ENCODE measurements at regions of chr1 and their contacts with region 1.

Region 1: DNA sequence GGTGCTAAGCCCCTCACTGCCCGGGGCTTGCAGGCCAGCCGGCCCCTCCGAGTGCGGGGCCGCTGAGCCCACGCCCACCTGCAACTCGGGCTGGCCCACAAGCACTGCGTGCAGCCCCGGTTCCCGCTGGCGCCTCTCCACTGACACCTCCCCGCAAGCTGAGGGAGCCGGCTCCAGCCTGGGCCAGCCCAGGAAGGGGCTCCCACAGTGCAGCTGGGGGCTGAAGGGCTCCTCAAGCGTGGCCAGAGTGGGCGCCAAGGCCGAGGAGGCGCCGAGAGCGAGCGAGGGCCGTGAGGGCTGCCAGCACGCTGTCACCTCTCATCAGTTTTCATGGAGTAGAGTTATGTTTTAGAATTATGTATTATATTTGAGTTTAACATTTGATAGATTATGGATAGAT is 176.5 kb upstream of the FAM78B start:
- DNase-seq: no peak
- H3K4me3 Mint-ChIP-seq: no peak overlapping the region
- H3K27ac Mint-ChIP-seq: no peak overlapping the region
- H3K4me1 Mint-ChIP-seq: no peaks in the 10 kb centered on the region
- H3K27me3 Mint-ChIP-seq: no peaks in the 10 kb centered on the region

Region 2: GRCh38 chr1:165949335-165950130 is 393.7 kb before region 1 on chr1:
- CTCF ChIA-PET with region 1: no interaction called
- POLR2A ChIA-PET with region 1: no interaction called
- intact Hi-C with region 1: loop called (anchors 5 kb)
- DNase-seq: no peak
- H3K4me3 Mint-ChIP-seq: no peak overlapping the region
- H3K27ac Mint-ChIP-seq: no peak overlapping the region
- H3K4me1 Mint-ChIP-seq: no peaks in the 10 kb centered on the region
- H3K27me3 Mint-ChIP-seq: peaks cover 2% of the 10 kb centered on the region